Prostate gland (tissue), 2 donors: ENCODE measurements at regions of chr4 and their contacts with region 1.

Region 1: DNA sequence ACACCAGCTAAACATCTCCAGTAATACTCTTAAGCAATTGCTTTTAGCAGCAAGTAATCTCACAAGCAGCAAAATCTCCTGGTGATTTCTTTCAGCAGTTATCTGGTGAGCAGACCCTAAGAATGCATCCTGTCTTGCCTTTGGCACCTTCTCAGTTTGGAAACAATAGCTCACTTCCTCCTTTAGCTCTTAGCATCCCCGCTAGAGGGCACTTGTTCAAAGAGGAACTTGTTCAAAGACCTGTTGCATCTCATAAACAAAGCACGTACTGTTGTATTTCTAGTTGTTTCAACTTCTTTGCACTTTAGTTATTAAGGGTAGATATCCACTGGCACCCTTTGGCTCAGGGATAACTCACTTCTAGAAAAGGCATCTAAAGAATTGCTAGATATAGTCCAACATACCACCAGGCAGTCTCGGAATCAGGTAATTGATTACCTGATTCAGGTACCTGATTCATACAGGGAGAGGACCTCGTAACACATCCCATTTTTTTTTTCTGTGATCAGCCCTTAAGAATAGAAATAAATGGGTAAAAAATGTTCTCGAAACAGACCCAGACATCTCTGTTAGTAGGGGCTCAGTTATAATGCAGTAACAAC is 81.9 kb upstream of the QRFPR start:
- DNase-seq: peak; percentile 46
- H3K4me3 ChIP-seq: no peak overlapping the region
- H3K27ac ChIP-seq: no peak overlapping the region
- H3K4me1 ChIP-seq: no peaks in the 10 kb centered on the region
- H3K27me3 ChIP-seq: no peaks in the 10 kb centered on the region
- CTCF ChIP-seq: peak; percentile 15 to 54 (median 49)
- POLR2A ChIP-seq: no peak

Region 2: DNA sequence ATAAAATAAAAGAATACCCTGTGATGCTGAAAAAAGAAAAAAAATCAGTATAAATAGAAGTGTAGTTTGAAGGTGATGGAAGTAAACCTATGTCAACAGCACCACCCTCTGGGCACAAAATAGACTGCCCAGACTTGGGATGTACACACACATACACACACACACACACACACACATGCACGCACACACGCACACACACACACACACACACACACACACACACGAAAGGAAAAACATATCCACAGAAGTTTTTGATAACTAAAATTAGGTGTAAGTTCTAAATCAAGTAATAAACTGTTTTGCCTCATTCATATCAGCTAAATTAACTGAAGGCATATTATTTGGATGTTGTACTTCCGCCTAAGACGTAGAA is 193.5 kb after region 1 on chr4:
- intact Hi-C with region 1: loop called (anchors 5 kb)
- DNase-seq: peak; percentile 20
- H3K4me3 ChIP-seq: no peak overlapping the region
- H3K27ac ChIP-seq: no peak overlapping the region
- H3K4me1 ChIP-seq: no peaks in the 10 kb centered on the region
- H3K27me3 ChIP-seq: no peaks in the 10 kb centered on the region
- CTCF ChIP-seq: peak in 3 of 4 experiments; percentile 36 to 59 (median 48)
- POLR2A ChIP-seq: no peak

Region 3: DNA sequence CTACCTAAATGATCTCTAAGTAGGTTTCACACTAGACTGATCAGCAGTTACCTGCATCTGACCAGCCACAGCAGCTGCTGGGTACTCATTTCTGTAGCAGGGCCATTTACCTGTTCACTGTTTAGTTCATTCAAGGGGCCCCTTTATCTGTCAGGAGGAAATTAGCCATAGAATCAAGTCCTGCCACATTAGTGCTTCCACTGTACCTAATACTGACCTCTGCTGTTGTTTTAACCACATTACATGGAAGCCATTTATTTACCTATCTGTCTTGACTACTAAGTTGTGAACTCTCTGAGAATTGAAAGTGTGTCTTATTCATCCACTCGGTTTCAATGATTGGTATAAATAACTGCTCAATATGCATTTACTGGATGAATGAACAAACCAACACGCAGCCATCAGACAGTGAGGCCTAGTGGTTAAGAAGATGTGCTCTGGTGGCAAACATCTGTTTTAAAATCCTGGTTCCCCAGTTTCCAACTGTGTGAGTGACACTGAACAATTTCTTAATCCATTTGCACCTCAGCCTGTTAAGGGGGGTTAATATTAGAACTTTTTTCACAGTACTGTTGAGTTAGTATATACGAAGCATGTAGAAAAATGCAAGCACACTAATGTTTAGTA is 264.0 kb after region 1 on chr4:
- intact Hi-C with region 1: loop called (anchors 10 kb)
- DNase-seq: peak; percentile 14
- H3K4me3 ChIP-seq: no peak overlapping the region
- H3K27ac ChIP-seq: no peak overlapping the region
- H3K4me1 ChIP-seq: no peaks in the 10 kb centered on the region
- H3K27me3 ChIP-seq: no peaks in the 10 kb centered on the region
- CTCF ChIP-seq: peak in 3 of 4 experiments; percentile 27 to 64 (median 64)
- POLR2A ChIP-seq: no peak